ENCODE measurements at regions of chr2 and their contacts with region 1.

Region 1: GRCh38 chr2:64914735-64915509 is 74.3 kb upstream of the SLC1A4 start:
- DNase-seq: no peak
- ATAC-seq: no peak
- H3K4me3 ChIP-seq: no peak overlapping the region
- H3K27ac ChIP-seq: no peak overlapping the region
- H3K4me1 ChIP-seq: no peaks in the 10 kb centered on the region
- H3K27me3 ChIP-seq: no peaks in the 10 kb centered on the region
- CTCF ChIP-seq: no peak
- POLR2A ChIP-seq: no peak

Region 2: GRCh38 chr2:64963719-64964118 is 48.8 kb after region 1 on chr2:
- intact Hi-C with region 1: no loop called
- DNase-seq: no peak
- ATAC-seq: no peak
- H3K4me3 ChIP-seq: no peak overlapping the region
- H3K27ac ChIP-seq: no peak overlapping the region
- H3K4me1 ChIP-seq: no peaks in the 10 kb centered on the region
- H3K27me3 ChIP-seq: no peaks in the 10 kb centered on the region
- CTCF ChIP-seq: no peak
- POLR2A ChIP-seq: no peak

Region 3: DNA sequence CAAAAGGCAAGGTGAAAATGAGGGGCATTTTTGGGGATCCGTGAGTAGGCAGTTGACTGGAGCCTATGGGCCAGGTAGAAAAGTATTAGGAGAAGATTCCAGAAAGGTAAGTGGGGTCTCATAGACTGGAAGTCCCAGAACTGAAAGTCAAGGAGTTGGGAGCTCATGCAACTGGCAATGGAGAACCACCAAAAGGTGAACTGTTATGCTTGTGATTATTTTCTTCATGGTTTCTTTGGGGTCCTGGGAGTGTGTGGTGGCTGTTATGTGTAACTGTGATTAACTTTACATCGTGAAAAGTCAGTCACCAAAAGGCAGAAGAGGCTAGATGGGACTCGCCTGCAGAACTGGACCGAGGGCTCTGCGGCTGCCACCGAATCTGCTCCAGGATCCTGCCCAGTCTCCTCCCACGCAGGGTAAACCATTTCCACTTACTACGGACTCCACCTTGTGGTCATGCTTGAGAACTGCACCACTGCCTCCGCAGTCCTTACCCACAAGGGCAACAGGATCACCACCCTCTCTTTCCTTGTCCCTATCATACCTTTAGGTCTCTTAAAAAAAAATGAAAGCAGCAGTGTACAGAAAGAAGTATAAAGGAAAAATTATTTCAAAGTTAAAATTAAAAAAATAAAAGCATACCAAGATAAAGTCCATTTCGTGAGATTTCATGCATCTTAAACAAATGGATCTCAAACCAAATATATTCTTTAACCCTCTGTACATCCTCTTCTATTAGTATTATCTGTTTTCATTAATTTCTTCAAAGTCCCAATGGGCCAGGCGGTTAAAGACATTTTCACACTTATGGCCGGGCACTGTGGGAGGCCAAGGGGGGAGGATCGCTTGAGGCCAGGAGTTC is 125.7 kb after region 1 on chr2:
- intact Hi-C with region 1: loop called (anchors 5 kb)
- DNase-seq: peak; percentile 88 to 92 (median 90)
- ATAC-seq: peak; percentile 99
- H3K4me3 ChIP-seq: no peak overlapping the region
- H3K27ac ChIP-seq: no peak overlapping the region
- H3K4me1 ChIP-seq: peaks cover 2% of the 10 kb centered on the region
- H3K27me3 ChIP-seq: no peaks in the 10 kb centered on the region
- CTCF ChIP-seq: peak; percentile 82 to 97 (median 96)
- POLR2A ChIP-seq: no peak

Region 4: DNA sequence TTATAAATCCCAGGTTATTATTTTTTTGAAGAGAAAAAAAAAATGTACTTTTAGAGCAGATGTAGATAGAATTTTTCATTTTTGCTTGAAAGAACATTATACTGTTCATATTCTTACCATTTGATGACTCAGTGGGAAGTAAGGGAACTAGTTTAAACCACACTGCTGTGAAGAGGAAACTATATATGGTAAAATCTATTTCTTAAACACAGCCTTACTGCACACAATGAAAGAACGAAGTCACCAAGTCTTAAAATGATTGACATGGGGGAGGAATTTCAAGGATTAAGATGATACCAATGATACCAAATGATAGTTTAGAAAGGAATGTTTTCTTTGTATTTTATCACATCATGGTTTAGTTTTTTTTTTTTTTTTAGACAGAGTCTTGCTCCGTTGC is 317.7 kb after region 1 on chr2:
- intact Hi-C with region 1: no loop called
- DNase-seq: no peak
- ATAC-seq: no peak
- H3K4me3 ChIP-seq: no peak overlapping the region
- H3K27ac ChIP-seq: no peak overlapping the region
- H3K4me1 ChIP-seq: peaks cover 34% of the 10 kb centered on the region
- H3K27me3 ChIP-seq: no peaks in the 10 kb centered on the region
- CTCF ChIP-seq: no peak
- POLR2A ChIP-seq: no peak